CD4-positive, alpha-beta memory T cell (primary cell): ENCODE measurements at regions of chr6 and their contacts with region 1.

Region 1: GRCh38 chr6:43477235-43478007 is at the start of gene TJAP1:
- DNase-seq: peak; percentile 93 to 96 (median 94)
- H3K4me3 ChIP-seq: peak within 1 kb of the TSS; percentile 45 to 69
- H3K4me3 Mint-ChIP-seq: peak within 1 kb of the TSS; percentile 85 to 97 (median 92)
- H3K27ac ChIP-seq: peak within 1 kb of the TSS; percentile 97
- H3K27ac Mint-ChIP-seq: peak within 1 kb of the TSS; percentile 89 to 99 (median 97)
- H3K4me1 ChIP-seq: peaks cover 28% of the 10 kb centered on the region
- H3K4me1 Mint-ChIP-seq: peaks cover 38 to 46% (median 42%) of the 10 kb centered on the region in 4 donors
- H3K27me3 ChIP-seq: no peaks in the 10 kb centered on the region
- H3K27me3 Mint-ChIP-seq: no peaks in the 10 kb centered on the region
- total RNA-seq, gene TJAP1: 52.0 to 54.4 TPM

Region 2: GRCh38 chr6:43328528-43328927 is 148.9 kb before region 1 on chr6:
- CTCF ChIA-PET with region 1: no interaction called
- POLR2A ChIA-PET with region 1: no interaction called
- intact Hi-C with region 1: no loop called
- DNase-seq: no peak
- H3K4me3 ChIP-seq: no peak overlapping the region
- H3K4me3 Mint-ChIP-seq: no peak overlapping the region
- H3K27ac ChIP-seq: no peak overlapping the region
- H3K27ac Mint-ChIP-seq: peak overlapping the region in 3 of 7 donors; percentile 11 to 24 (median 14)
- H3K4me1 ChIP-seq: peaks cover 17% of the 10 kb centered on the region
- H3K4me1 Mint-ChIP-seq: peaks cover 14 to 16% (median 15%) of the 10 kb centered on the region in 4 donors
- H3K27me3 ChIP-seq: no peaks in the 10 kb centered on the region
- H3K27me3 Mint-ChIP-seq: no peaks in the 10 kb centered on the region

Region 3: DNA sequence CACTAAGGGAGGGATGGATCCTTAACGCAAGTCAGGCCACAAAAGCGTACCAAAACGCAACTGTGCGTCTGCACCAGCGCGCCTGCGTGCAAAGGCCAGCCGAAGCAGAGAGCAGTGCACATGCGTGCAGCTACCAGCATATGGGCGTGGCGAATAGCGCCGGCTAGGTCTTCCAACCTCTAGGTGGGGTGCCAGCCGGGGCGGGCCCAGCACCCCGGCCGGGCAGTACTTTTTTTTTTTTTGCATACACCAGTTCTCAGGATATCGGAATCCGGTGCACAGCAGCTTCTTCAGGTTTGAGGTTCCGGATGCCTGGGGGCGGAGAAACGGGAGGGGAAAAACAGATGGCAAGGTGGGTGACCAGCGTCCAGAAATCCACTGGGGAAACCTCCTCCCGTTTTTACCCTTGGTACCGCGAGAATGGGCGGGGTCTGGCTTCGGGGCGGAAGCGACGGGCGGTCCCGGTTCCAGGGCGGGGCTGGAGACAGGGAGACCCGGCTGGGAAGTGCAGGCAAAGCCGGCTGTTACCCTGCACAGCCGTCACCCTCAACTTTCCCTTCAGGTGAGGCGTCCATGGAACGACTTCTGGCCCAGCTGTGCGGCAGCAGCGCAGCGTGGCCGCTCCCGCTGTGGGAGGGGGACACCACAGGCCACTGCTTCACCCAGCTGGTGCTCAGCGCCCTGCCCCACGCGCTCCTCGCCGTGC is 49.9 kb before region 1 on chr6 and contains the start of gene ABCC10:
- CTCF ChIA-PET with region 1: no interaction called
- POLR2A ChIA-PET with region 1: interaction called, 9 read pairs
- intact Hi-C with region 1: loop called (anchors 1 kb)
- DNase-seq: peak; percentile 93 to 97 (median 95)
- H3K4me3 ChIP-seq: peak within 1 kb of the TSS; percentile 70 to 95
- H3K4me3 Mint-ChIP-seq: peak within 1 kb of the TSS; percentile 92 to 98 (median 96)
- H3K27ac ChIP-seq: peak within 1 kb of the TSS; percentile 79
- H3K27ac Mint-ChIP-seq: peak within 1 kb of the TSS; percentile 88 to 99 (median 98)
- H3K4me1 ChIP-seq: peaks cover 30% of the 10 kb centered on the region
- H3K4me1 Mint-ChIP-seq: peaks cover 20 to 28% (median 24%) of the 10 kb centered on the region in 4 donors
- H3K27me3 ChIP-seq: no peaks in the 10 kb centered on the region
- H3K27me3 Mint-ChIP-seq: no peaks in the 10 kb centered on the region
- total RNA-seq, gene ABCC10: 69.9 to 80.0 TPM

Region 4: GRCh38 chr6:43444036-43444435 is 33.4 kb before region 1 on chr6:
- CTCF ChIA-PET with region 1: no interaction called
- POLR2A ChIA-PET with region 1: no interaction called
- intact Hi-C with region 1: no loop called
- DNase-seq: no peak
- H3K4me3 ChIP-seq: no peak overlapping the region
- H3K4me3 Mint-ChIP-seq: no peak overlapping the region
- H3K27ac ChIP-seq: no peak overlapping the region
- H3K27ac Mint-ChIP-seq: no peak overlapping the region
- H3K4me1 ChIP-seq: no peaks in the 10 kb centered on the region
- H3K4me1 Mint-ChIP-seq: peaks cover 0 to 3% (median 0%) of the 10 kb centered on the region in 4 donors
- H3K27me3 ChIP-seq: no peaks in the 10 kb centered on the region
- H3K27me3 Mint-ChIP-seq: no peaks in the 10 kb centered on the region

Region 5: DNA sequence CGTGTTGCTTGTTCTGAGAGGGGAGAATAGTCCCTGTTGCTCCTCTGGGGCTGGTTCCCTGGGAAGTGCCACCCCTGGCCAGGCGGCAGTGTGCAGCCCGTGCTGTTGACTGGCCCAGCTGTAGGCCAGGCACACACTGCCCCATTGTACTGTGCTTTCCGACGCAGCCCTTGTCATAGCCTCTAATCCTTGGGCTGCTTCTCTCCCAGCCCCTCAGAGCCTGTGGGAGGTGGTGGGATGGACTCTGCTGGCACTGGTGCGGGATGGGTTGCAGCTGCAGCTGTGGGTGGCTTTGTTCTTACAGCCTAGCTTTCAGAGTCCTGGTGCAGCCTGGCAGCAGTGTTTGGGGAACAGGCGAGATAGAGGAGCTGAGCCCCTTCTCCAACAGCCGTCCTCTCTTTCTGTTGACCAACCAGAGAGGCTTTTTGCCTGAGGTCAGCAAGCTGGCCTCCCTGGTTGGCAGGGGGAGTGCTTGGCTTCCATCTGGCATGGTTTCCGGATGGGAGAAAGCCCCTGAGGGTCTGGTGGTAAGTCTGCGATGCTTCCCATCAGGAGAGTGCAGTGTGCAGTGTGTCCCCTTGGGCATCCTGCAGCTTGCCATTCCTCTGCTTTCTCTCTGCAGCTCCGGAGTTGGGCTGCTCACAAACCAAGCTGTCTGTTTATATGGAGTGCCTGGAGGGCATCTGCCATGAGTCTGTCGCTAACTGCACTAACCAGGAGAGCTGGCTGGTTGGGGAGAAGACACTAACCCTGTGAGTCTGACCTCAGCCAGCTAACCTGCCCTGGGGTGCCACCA is 12.1 kb after region 1 on chr6:
- CTCF ChIA-PET with region 1: interaction called, 11 read pairs
- POLR2A ChIA-PET with region 1: interaction called, 33 read pairs
- intact Hi-C with region 1: loop called (anchors 1 kb)
- DNase-seq: no peak
- H3K4me3 ChIP-seq: no peak overlapping the region
- H3K4me3 Mint-ChIP-seq: no peak overlapping the region
- H3K27ac ChIP-seq: no peak overlapping the region
- H3K27ac Mint-ChIP-seq: peak overlapping the region in 3 of 7 donors; percentile 22 to 68 (median 60)
- H3K4me1 ChIP-seq: peaks cover 15% of the 10 kb centered on the region
- H3K4me1 Mint-ChIP-seq: peaks cover 17 to 39% (median 21%) of the 10 kb centered on the region in 4 donors
- H3K27me3 ChIP-seq: no peaks in the 10 kb centered on the region
- H3K27me3 Mint-ChIP-seq: no peaks in the 10 kb centered on the region

Region 6: GRCh38 chr6:43496370-43497128 is 19.1 kb after region 1 on chr6:
- CTCF ChIA-PET with region 1: interaction called, 11 read pairs
- POLR2A ChIA-PET with region 1: interaction called, 33 read pairs
- intact Hi-C with region 1: no loop called
- DNase-seq: no peak
- H3K4me3 ChIP-seq: no peak overlapping the region
- H3K4me3 Mint-ChIP-seq: no peak overlapping the region
- H3K27ac ChIP-seq: no peak overlapping the region
- H3K27ac Mint-ChIP-seq: peak overlapping the region in 5 of 7 donors; percentile 47 to 85 (median 65)
- H3K4me1 ChIP-seq: peaks cover 33% of the 10 kb centered on the region
- H3K4me1 Mint-ChIP-seq: peaks cover 20 to 37% (median 27%) of the 10 kb centered on the region in 4 donors
- H3K27me3 ChIP-seq: no peaks in the 10 kb centered on the region
- H3K27me3 Mint-ChIP-seq: no peaks in the 10 kb centered on the region

Region 7: GRCh38 chr6:43516697-43517504 is 39.5 kb after region 1 on chr6 and contains the starts of genes POLR1C and YIPF3:
- CTCF ChIA-PET with region 1: no interaction called
- POLR2A ChIA-PET with region 1: interaction called, 6 read pairs
- intact Hi-C with region 1: loop called (anchors 1 kb)
- DNase-seq: peak; percentile 91 to 97 (median 96)
- H3K4me3 ChIP-seq: peak within 1 kb of the TSS; percentile 91 to 99
- H3K4me3 Mint-ChIP-seq: no peak within 1 kb of the TSS
- H3K27ac ChIP-seq: peak within 1 kb of the TSS; percentile 92
- H3K27ac Mint-ChIP-seq: no peak within 1 kb of the TSS
- H3K4me1 ChIP-seq: peaks cover 44% of the 10 kb centered on the region
- H3K4me1 Mint-ChIP-seq: peaks cover 10 to 36% (median 24%) of the 10 kb centered on the region in 4 donors
- H3K27me3 ChIP-seq: no peaks in the 10 kb centered on the region
- H3K27me3 Mint-ChIP-seq: no peaks in the 10 kb centered on the region
- total RNA-seq, gene POLR1C: 42.5 to 47.7 TPM
- total RNA-seq, gene YIPF3: 74.8 to 82.9 TPM